ENCODE measurements at regions of chr15 and their contacts with region 1.

Region 1: GRCh38 chr15:38029736-38030135 is 95.3 kb downstream of the TMCO5A start:
- DNase-seq: no peak
- H3K4me3 ChIP-seq: no peak overlapping the region
- H3K27ac ChIP-seq: no peak overlapping the region
- H3K4me1 ChIP-seq: no peaks in the 10 kb centered on the region
- H3K27me3 ChIP-seq: no peaks in the 10 kb centered on the region
- CTCF ChIP-seq: no peak
- POLR2A ChIP-seq: no peak

Region 2: DNA sequence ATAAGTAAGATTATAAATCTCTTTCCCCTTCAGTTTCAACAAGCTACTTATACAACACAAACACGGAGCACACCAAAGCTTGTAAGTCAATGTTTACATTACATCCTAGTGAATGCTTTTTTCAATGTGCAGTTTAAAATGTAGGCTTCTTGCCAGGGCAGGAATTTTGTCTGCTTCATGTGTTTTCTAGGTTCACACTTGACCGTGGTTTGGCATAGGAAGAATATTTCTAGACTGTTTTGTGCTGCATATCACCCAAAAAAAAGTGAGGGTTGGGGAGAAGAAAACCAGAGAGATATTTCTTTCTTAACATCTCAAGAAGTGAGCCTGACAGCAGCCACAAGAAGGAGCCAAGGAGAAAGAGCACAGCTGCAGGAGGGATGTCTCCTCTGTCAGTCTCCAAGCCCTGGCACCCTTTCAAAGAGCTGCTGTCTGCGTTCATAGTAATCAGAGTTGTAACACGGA is 1185.2 kb before region 1 on chr15:
- intact Hi-C with region 1: loop called (anchors 5 kb)
- DNase-seq: no peak
- H3K4me3 ChIP-seq: no peak overlapping the region
- H3K27ac ChIP-seq: no peak overlapping the region
- H3K4me1 ChIP-seq: no peaks in the 10 kb centered on the region
- H3K27me3 ChIP-seq: no peaks in the 10 kb centered on the region
- CTCF ChIP-seq: no peak
- POLR2A ChIP-seq: no peak